Dendritic cell treated with granulocyte-macrophage colony-stimulating factor and Interleukin-4, amounts not matched to agents 40 ng/mL and 50 ng/mL, for 4 days (primary cell): ENCODE measurements at regions of chr17 and their contacts with region 1.

Region 1: DNA sequence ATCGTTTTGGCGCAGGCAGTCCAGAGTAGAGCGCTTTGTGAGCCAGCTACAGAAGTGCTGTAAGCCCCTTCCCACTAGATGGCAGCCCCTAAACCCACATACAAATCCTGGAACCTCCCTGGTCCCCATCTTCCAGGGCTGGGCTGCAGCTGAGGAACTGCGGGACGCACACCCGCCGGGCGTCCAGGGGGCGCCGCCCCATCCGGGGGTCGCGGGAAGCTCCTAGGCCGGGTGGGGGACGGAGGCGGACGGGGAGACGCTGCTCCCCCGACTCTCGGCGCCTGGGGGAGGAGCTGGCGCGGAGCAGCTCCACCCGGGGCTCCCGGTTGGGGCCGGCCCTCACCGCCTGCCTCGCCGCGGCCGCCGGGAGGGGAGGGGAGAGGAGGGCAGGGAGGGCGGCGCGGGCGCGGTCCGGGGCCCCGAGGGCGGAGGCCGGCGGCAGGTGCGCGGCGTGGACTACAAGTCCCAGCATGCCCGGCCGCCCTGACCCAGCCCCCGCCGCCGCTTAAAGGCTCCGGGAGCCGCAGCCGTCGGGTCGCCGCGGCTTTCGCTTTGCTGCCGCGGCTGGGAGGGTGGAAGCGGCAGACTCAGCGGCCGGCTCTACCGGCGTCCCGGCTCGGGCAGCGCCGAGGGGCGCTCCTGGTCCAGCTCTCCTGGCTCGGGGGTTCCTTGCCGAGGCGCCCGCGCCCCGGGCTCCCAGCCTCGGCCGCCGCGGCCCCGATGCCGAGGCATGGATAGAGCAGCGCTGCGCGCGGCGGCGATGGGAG is at the start of gene KSR1:
- H3K4me3 Mint-ChIP-seq: peak within 1 kb of the TSS; percentile 86
- H3K27ac Mint-ChIP-seq: peak within 1 kb of the TSS; percentile 79
- H3K4me1 Mint-ChIP-seq: peaks cover 25% of the 10 kb centered on the region
- H3K27me3 Mint-ChIP-seq: peaks cover 6% of the 10 kb centered on the region

Region 2: DNA sequence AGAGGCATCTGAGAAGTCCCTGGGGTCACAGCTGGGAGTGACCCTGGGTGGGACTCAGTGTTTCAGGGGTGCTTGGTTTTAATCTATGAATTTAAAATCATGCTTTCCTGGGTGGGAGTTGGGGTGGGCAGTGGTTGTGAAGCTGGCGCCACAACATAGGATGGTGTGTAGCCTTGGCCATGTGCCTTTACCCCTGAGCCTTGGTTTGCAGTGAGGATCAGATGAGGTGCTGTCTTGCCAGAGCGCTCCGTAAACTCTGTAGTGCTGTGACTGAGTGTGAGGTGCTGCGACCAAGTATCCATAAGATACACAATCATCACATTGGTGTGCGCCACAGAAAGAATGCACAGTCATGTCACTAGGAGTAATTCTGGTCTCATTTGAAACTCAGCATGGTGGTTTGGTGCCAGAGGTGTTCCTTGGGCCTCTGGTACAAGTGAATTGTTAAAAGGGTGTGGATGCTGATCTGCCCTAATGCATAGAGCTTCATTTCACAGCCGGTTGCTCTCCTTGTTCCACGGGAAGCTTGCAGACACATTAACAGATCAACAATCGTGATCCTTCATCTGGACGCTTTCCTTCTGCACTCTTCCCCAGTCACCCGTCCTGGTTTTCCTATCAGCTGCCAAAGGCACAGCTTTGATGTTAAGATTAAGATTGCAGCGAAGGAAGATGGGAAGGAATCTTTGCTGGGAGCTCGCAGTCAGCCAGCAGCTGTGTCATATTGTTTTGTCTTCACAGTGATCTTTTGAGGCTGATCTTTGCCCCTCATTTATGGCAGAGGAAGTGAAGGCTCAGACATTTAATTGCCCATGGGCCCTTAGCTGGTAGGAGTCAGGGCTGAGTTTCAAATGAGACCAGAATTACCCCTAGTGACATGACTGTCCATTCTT is 79.2 kb after region 1 on chr17:
- intact Hi-C with region 1: no loop called
- H3K4me3 Mint-ChIP-seq: no peak overlapping the region
- H3K27ac Mint-ChIP-seq: no peak overlapping the region
- H3K4me1 Mint-ChIP-seq: peaks cover 70% of the 10 kb centered on the region
- H3K27me3 Mint-ChIP-seq: peaks cover 1% of the 10 kb centered on the region

Region 3: DNA sequence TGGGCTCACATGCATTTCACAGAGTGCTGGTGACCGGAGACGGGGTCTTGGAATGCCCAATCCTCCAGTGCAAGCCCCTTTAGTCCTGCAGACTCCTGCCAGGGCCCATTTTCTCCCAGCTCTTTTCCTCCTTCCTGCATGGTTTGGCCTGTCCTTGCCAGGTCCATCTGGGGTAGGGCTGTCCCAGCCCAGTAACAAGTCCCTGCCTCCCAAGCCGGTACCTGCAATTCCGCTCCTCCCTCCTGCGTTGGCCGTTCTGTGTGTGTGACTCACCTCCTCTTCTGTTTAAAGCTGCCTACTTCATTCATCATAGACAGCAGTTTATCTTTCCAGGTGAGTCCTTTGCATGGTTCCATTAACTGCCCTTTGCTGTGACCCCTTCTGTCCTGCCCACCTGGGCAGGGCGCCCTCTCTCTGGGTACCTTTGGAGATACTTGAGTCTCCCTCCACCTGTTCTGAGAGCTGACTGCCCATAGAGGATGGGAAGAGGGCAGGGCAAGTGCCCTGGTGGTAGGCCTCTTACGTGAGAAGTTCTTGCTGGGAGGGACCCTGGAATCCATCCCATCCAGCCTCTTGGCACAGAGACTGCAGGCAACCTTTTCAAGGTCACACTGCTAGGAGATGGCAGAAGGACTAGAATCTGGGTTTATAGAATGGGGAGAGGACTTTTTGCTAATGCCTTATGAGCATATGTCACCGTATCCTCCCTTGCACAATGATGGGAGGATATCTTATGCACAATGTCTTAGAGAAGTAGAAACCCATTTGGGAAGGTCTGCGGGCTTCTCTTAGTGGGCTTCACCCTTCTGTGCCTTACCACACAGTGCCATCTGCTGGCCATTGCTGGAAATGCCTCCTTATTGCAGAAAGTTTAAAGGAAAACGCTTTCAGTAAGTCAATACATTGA is 145.2 kb after region 1 on chr17:
- intact Hi-C with region 1: loop called (anchors 5 kb)
- H3K4me3 Mint-ChIP-seq: no peak overlapping the region
- H3K27ac Mint-ChIP-seq: no peak overlapping the region
- H3K4me1 Mint-ChIP-seq: peaks cover 5% of the 10 kb centered on the region
- H3K27me3 Mint-ChIP-seq: no peaks in the 10 kb centered on the region

Region 4: GRCh38 chr17:27644586-27644985 is 188.5 kb after region 1 on chr17:
- intact Hi-C with region 1: no loop called
- H3K4me3 Mint-ChIP-seq: no peak overlapping the region
- H3K27ac Mint-ChIP-seq: peak overlapping the region; percentile 26
- H3K4me1 Mint-ChIP-seq: peaks cover 30% of the 10 kb centered on the region
- H3K27me3 Mint-ChIP-seq: no peaks in the 10 kb centered on the region